AG04450 (cell line): ENCODE measurements at regions of chr15 and their contacts with region 1.

Region 1: DNA sequence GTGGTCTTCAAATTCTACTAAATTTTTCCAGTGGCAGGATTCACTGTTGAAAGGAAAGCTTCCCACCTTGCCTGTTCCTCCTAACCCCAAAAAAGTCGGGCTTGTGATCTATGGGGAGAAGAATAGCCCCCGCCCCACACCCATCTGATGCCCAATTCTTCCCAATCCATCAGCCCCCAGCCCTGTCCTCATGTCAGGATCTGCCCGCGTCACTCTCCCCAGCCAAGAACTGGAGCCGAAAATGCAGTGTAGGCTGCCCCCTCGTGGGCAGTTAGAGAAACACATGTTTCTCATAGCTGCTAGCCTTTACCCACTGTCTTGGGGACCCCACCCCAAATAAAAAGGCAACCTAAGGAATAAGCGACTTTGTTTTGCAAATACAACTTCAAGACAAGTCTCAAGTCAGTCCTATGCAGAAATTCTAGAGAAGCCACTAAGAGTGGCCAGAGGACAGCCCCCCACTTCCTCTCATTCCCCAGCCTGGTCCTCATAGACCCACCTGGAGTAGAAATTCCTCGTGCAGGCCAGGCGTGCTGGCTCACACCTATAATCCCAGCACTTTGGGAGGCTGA is 13.0 kb upstream of the CSK start:
- DNase-seq: no peak
- H3K4me3 ChIP-seq: no peak overlapping the region
- H3K27ac ChIP-seq: no peak overlapping the region
- H3K27me3 ChIP-seq: peaks cover 6% of the 10 kb centered on the region
- CTCF ChIP-seq: peak; percentile 74

Region 2: GRCh38 chr15:74511583-74511982 is 257.3 kb before region 1 on chr15:
- CTCF ChIA-PET with region 1: no interaction called
- POLR2A ChIA-PET with region 1: no interaction called
- DNase-seq: no peak
- H3K4me3 ChIP-seq: no peak overlapping the region
- H3K27ac ChIP-seq: no peak overlapping the region
- H3K27me3 ChIP-seq: no peaks in the 10 kb centered on the region
- CTCF ChIP-seq: no peak

Region 3: GRCh38 chr15:74620636-74621545 is 148.0 kb before region 1 on chr15:
- CTCF ChIA-PET with region 1: interaction called, 10 read pairs
- POLR2A ChIA-PET with region 1: no interaction called
- DNase-seq: no peak
- H3K4me3 ChIP-seq: no peak overlapping the region
- H3K27ac ChIP-seq: no peak overlapping the region
- H3K27me3 ChIP-seq: no peaks in the 10 kb centered on the region
- CTCF ChIP-seq: peak; percentile 93

Region 4: DNA sequence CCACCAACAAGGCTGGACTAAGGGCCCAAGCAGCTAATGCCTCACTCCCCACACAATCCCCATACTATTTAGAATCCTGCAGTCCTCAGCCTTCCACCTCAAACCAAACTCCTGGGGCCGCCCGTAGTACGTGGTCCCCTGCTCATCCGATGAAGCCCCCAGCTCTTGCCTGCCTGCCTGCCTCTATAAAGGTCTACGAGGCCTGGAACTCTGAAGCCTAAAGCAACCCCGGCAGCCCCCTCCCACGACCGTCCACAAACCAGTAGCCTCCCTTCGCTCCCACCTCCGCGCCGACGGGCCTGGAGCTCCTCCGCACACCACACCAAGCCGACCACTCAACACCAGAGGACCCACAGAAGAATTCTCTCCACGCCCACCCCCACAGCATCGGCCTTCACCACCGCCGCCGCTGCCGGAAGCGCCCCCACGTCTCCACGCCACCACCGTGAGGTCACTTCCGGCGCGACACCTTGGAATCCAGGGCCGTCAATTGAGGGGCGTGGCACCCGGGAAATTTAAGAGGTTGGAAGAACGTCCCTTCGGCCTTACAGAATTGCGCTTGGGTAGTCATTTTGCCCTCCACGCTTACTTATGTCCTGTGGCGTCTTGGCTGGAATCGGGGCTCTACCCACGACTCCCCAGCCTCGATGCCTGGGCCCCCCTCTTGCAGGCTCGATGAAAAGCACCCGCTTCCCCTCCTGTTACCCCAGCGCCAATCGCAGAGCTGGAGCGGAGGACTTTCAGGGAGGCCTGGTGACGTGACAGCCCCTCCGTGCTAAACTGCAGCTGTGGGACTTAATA is 73.1 kb before region 1 on chr15 and contains the start of gene EDC3:
- CTCF ChIA-PET with region 1: no interaction called
- POLR2A ChIA-PET with region 1: no interaction called
- DNase-seq: peak; percentile 23
- H3K4me3 ChIP-seq: peak within 1 kb of the TSS; percentile 93
- H3K27ac ChIP-seq: peak within 1 kb of the TSS; percentile 63
- H3K27me3 ChIP-seq: no peaks in the 10 kb centered on the region
- CTCF ChIP-seq: no peak
- polyA plus RNA-seq, gene EDC3: 37.1 and 43.6 TPM in 2 replicates

Region 5: DNA sequence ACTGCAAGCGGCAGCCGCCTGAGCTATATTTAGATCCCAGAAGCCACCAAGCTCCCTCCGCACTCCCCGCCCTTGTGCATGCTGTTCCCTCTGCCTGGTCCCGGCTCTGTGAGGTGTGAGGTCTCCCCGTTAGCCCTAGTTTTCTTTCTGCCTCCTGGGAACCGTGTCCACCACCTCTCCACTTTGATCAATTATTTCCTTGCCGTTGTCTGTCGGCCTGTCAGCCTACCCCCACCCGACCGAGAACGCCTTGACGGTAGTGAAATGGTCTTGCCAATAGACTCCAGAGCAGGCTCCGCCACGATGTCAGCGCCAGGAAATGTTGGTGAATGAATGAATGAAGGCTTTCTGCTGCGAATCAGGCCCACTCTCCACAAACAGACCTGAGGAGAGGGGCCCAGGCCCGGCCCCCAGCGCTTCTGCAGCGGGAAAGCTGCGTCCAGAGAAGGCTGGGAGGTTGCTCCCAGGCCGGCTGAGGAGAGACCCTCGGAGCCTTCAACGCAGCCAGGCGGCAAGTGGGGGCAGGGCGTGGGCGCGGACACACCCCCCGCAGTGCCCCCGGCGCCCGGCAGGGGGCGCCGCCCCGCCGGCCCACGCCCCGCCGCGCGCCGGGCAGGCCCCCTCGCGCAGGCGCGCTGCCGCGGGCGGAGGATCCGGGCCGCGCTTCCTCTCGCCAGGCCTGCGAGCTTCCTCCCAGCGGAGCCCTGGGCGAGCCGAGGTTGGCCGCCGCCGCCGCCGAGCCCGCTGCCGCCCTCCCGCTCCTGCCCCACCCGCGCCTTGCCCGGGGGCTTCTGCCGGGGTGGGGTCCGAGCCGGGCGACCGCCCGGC is 12.8 kb after region 1 on chr15 and contains the start of gene CSK:
- CTCF ChIA-PET with region 1: interaction called, 54 read pairs
- POLR2A ChIA-PET with region 1: no interaction called
- DNase-seq: no peak
- H3K4me3 ChIP-seq: peak within 1 kb of the TSS; percentile 90
- H3K27ac ChIP-seq: no peak within 1 kb of the TSS
- H3K27me3 ChIP-seq: no peaks in the 10 kb centered on the region
- CTCF ChIP-seq: peak; percentile 48
- polyA plus RNA-seq, gene CSK: 17.2 and 25.1 TPM in 2 replicates

Region 6: GRCh38 chr15:74793135-74794028 is 24.5 kb after region 1 on chr15:
- CTCF ChIA-PET with region 1: interaction called, 21 read pairs
- POLR2A ChIA-PET with region 1: no interaction called
- DNase-seq: no peak
- H3K4me3 ChIP-seq: no peak overlapping the region
- H3K27ac ChIP-seq: no peak overlapping the region
- H3K27me3 ChIP-seq: no peaks in the 10 kb centered on the region
- CTCF ChIP-seq: peak; percentile 21; the same call in 1 of the 2 replicates

Region 7: GRCh38 chr15:74906446-74907162 is 137.7 kb after region 1 on chr15 and contains the start of gene FAM219B:
- CTCF ChIA-PET with region 1: interaction called, 42 read pairs
- POLR2A ChIA-PET with region 1: no interaction called
- DNase-seq: peak; percentile 60
- H3K4me3 ChIP-seq: peak within 1 kb of the TSS; percentile 81
- H3K27ac ChIP-seq: peak within 1 kb of the TSS; percentile 81
- H3K27me3 ChIP-seq: no peaks in the 10 kb centered on the region
- CTCF ChIP-seq: no peak
- polyA plus RNA-seq, gene FAM219B: 38.2 and 43.2 TPM in 2 replicates